Common myeloid progenitor, CD34-positive (primary cell): ENCODE measurements at regions of chr5 and their contacts with region 1.

Region 1: DNA sequence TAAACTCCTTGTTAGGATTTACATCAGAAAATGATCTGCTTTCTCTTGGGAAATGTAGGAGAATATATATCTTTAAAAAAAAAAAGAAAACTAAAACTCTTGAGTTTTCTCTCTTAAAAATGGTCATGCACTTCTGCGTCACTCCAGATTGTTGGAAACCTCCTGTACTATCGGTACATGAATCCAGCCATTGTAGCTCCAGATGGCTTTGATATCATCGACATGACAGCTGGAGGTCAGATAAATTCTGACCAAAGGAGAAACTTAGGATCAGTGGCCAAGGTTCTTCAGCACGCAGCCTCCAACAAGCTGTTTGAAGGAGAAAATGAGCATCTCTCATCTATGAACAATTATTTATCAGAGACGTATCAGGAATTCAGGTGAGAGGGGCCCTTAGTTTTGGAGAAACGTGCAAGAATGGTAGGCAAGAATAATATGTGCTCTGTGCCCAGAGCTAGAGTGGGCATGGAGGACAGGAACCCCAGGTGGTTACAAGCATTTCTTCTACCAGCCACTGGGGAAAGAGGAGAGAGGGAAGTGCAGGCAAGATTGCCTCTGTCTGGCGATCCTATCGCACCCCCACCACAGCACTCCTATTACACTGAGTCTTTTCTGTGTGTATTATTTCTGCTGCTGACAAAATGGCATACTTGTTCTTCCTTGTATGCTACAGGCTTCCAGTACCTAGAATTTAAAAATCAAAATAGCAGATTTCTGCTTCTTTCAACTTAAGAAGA is 41.4 kb upstream of the F2R start:
- DNase-seq: peak in 2 of 3 donors; percentile 35 to 53
- H3K4me3 ChIP-seq: no peak overlapping the region
- H3K27ac ChIP-seq: no peak overlapping the region
- H3K4me1 ChIP-seq: peaks cover 0 to 20% (median 7%) of the 10 kb centered on the region in 4 experiments
- H3K27me3 ChIP-seq: no peaks in the 10 kb centered on the region

Region 2: DNA sequence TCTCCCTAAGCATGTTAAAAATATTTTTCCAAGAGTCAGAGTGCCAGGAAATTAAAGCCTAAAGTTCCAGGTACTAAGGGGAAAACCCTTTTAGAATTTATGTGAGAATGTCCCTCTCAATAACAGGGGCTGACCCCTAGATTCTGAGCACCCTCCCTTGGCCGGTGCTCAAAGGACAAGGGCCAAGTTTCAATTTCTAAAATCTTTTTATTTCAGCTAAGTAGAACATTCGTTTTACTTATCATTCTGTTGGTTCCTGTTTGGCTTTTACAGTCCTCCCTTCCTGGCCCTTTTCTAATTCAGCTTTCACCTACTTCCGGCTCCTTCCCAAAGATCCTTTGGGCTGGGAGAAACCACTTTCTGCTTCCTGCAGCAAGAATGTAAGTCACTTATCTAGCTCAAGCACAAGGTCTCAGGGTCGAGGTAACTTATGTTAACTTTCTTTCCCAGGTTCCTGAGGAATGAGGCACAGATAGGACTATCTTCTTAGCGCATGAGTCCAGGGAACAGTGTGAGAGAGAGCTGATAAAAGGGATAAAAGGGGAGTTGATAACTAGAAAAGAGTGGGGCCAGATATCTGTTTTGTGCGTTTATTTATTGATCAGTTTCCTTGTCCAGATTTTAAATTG is 16.7 kb before region 1 on chr5:
- CTCF ChIA-PET with region 1: interaction called, 12 read pairs
- POLR2A ChIA-PET with region 1: no interaction called
- DNase-seq: peak; percentile 29 to 41 (median 31)
- H3K4me3 ChIP-seq: no peak overlapping the region
- H3K27ac ChIP-seq: peak overlapping the region in 1 of 2 experiments; percentile 35
- H3K4me1 ChIP-seq: no peaks in the 10 kb centered on the region
- H3K27me3 ChIP-seq: no peaks in the 10 kb centered on the region